Gastrocnemius medialis (tissue), 4 donors: ENCODE measurements at regions of chr22 and their contacts with region 1.

Region 1: DNA sequence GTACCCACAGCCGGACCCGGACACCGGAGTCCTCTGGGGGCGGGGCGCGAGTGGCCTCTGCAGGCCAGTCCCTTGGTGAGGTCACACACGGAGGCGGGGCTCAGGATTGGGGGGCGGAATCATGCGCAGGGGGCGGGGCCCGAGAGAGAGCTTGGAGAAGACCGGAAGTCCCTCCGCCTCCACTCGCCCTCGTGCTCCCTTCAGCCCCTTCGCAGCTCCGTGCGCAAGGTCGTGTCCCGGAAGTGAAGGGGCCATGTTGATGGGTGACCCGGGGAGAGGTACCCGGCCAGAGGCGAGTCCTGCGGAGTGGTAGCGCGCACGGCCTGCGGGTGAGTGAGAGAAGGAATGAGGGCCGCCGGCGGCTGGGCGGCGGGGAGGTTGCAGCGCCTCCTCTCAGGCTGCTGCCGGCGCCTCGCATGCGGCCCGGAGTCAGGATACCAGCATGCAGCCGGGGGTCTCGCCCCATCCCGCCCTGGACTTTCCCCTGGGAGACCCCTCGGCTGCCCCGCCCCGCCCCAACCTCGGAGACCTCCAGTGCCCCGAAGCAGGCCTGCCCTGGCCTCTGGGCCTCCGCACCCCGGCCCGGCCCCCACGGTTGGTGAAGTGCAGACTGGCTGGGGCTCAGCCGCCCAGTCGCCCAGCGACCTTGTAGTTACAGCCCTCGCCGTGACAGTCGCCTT is at the start of gene MIEF1:
- DNase-seq: peak; percentile 97 to 98
- ATAC-seq: peak; percentile 95 to 97
- H3K4me3 ChIP-seq: peak within 1 kb of the TSS; percentile 89 to 94 (median 90)
- H3K27ac ChIP-seq: peak within 1 kb of the TSS; percentile 85 to 95 (median 90)
- H3K4me1 ChIP-seq: peaks cover 29 to 35% of the 10 kb centered on the region in 2 donors
- H3K27me3 ChIP-seq: no peaks in the 10 kb centered on the region
- CTCF ChIP-seq: no peak
- POLR2A ChIP-seq: peak; percentile 47 to 76
- total RNA-seq, gene MIEF1: 11.4 to 25.4 (median 12.9) TPM

Region 2: GRCh38 chr22:39395936-39396796 is 106.1 kb before region 1 on chr22:
- in situ Hi-C with region 1: loop called in 1 of 4 experiments (anchors 10 kb)
- intact Hi-C with region 1: loop called (anchors 1 kb)
- DNase-seq: no peak
- ATAC-seq: no peak
- H3K4me3 ChIP-seq: no peak overlapping the region
- H3K27ac ChIP-seq: no peak overlapping the region
- H3K4me1 ChIP-seq: peaks cover 10% of the 10 kb centered on the region in 2 donors
- H3K27me3 ChIP-seq: no peaks in the 10 kb centered on the region
- CTCF ChIP-seq: no peak
- POLR2A ChIP-seq: no peak

Region 3: GRCh38 chr22:39405346-39406085 is 96.7 kb before region 1 on chr22:
- in situ Hi-C with region 1: loop called in 1 of 4 experiments (anchors 10 kb)
- intact Hi-C with region 1: no loop called
- DNase-seq: no peak
- ATAC-seq: peak in 1 of 2 donors; percentile 21
- H3K4me3 ChIP-seq: no peak overlapping the region
- H3K27ac ChIP-seq: peak overlapping the region in 1 of 4 donors; percentile 38
- H3K4me1 ChIP-seq: peaks cover 27 to 29% of the 10 kb centered on the region in 2 donors
- H3K27me3 ChIP-seq: no peaks in the 10 kb centered on the region
- CTCF ChIP-seq: no peak
- POLR2A ChIP-seq: no peak

Region 4: GRCh38 chr22:39431821-39432251 is 70.4 kb before region 1 on chr22:
- in situ Hi-C with region 1: no loop called
- intact Hi-C with region 1: loop called (anchors 5 kb)
- DNase-seq: peak; percentile 36 to 75
- ATAC-seq: peak; percentile 93 to 97
- H3K4me3 ChIP-seq: peak overlapping the region in 1 of 4 donors; percentile 15
- H3K27ac ChIP-seq: peak overlapping the region; percentile 89 to 93 (median 91)
- H3K4me1 ChIP-seq: peaks cover 31 to 43% of the 10 kb centered on the region in 2 donors
- H3K27me3 ChIP-seq: no peaks in the 10 kb centered on the region
- CTCF ChIP-seq: no peak
- POLR2A ChIP-seq: no peak